ENCODE measurements at regions of chr3 and their contacts with region 1.

Region 1: DNA sequence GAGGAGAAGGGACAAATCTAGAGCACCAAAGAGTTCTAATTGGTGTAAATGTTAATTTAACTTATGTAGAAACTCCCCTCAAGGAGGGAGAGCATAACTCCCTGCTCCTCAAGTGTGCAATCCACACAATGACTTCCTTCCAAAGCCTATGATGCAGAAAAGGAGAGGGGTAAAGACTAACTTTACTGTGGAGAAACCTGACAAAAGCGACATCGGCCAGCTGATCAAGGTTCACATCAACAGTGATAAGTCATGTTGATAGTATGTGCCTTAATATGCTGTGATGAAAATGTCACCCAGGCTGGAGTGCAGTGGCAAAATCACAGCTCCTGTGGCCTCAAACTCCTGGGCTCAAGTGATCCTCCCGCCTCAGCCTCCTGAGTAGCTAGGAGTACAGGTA is 76.5 kb downstream of the TFDP2 start:
- DNase-seq: no peak
- CTCF ChIP-seq: no peak

Region 2: DNA sequence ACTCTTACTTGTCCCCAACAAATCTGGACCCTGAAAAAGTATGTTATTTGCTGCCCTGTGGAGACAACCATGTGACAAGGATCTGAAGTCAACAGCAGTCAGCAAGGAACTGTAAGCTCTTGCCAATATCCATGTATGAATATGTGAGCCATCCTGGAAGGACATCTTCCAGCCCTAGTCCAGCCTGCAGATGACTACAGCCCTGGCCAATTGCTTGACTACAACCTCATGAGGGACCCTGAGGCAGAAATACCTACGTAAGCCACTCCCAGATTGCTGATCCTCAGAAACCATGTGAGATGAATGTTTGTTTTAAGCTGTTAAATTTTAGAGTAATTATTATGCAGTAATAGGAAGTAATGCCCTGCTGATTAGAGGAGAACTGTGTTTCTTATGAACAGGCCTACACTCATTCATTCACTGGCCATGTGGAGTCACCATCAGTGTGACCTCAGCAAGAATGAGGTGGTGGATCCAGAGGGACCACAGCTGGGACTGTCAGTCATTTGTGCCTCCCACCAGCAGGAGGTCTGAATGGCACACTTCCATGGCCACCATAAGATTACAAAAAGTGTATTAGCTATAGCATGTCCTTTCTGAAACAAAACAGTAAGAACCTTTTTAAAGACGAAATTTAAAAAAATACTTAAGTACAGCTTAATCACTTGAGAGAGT is 16.0 kb before region 1 on chr3:
- CTCF ChIA-PET with region 1: interaction called, 10 read pairs
- POLR2A ChIA-PET with region 1: interaction called, 3 read pairs
- DNase-seq: no peak
- CTCF ChIP-seq: no peak